Activated naive CD8-positive, alpha-beta T cell treated with anti-CD3 and anti-CD28 coated beads, Interleukin-2, amount 10 ng/mL, durations not matched to agents 7 days and 5 days (primary cell): ENCODE measurements at regions of chr9 and their contacts with region 1.

Region 1: GRCh38 chr9:137114610-137115391 is at the start of gene DPP7:
- DNase-seq: peak; percentile 91
- ATAC-seq: peak; percentile 89
- H3K4me3 Mint-ChIP-seq: peak within 1 kb of the TSS; percentile 74
- H3K27ac Mint-ChIP-seq: peak within 1 kb of the TSS; percentile 52
- H3K4me1 Mint-ChIP-seq: peaks cover 3% of the 10 kb centered on the region
- H3K27me3 Mint-ChIP-seq: no peaks in the 10 kb centered on the region
- total RNA-seq, gene DPP7: 314 to 322 TPM

Region 2: GRCh38 chr9:137086531-137087408 is 28.0 kb before region 1 on chr9 and contains the start of gene MAN1B1:
- POLR2A ChIA-PET with region 1: interaction called, 12 read pairs
- DNase-seq: peak; percentile 99
- ATAC-seq: peak; percentile 89
- H3K4me3 Mint-ChIP-seq: peak within 1 kb of the TSS; percentile 92
- H3K27ac Mint-ChIP-seq: peak within 1 kb of the TSS; percentile 93
- H3K4me1 Mint-ChIP-seq: peaks cover 23% of the 10 kb centered on the region
- H3K27me3 Mint-ChIP-seq: no peaks in the 10 kb centered on the region
- total RNA-seq, gene MAN1B1: 63.2 to 63.9 TPM

Region 3: DNA sequence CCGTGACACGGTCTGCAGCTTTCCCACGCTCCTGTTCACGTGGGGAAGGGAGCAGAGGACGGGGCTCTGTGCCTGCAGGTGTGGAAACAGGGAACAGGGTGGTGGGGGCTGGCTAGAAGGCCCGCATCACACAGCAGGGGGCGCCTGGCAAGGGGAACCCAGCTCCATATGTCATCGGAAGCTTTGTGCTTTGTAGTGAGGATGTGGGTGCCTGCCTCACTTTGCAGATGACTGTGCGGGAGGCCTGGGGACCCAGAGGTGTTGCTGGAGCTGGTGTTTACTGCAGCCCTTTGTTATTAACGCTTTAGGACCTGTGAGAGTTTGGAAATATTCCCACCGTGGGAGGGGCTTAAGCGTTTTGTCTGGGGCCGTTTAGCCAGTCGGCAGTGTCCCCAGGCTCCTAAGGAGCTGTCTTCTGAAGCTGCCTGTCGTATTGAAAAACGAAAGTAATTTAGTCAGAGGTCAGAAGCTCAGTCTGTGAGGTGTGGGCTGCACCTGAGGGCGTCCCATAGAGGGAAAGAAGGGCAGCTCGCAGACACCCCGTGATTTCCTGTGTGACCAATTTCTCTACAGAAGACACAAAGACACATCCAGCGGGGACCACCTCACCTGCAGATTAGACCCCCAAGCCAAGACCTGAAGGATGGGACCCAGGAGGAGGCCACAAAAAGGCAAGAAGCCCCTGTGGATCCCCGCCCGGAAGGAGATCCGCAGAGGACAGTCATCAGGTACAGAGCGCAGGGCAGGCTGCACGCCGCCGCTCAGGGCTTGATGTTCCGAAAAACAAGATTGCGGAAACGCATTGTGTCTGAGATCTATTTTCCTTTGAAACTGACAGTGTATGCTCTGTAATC is 18.9 kb before region 1 on chr9:
- POLR2A ChIA-PET with region 1: interaction called, 28 read pairs
- DNase-seq: peak; percentile 87
- ATAC-seq: peak; percentile 99
- H3K4me3 Mint-ChIP-seq: peak overlapping the region; percentile 85
- H3K27ac Mint-ChIP-seq: peak overlapping the region; percentile 96
- H3K4me1 Mint-ChIP-seq: peaks cover 16% of the 10 kb centered on the region
- H3K27me3 Mint-ChIP-seq: no peaks in the 10 kb centered on the region

Region 4: GRCh38 chr9:137168905-137169856 is 54.4 kb after region 1 on chr9:
- POLR2A ChIA-PET with region 1: no interaction called
- DNase-seq: peak; percentile 54
- ATAC-seq: peak; percentile 18
- H3K4me3 Mint-ChIP-seq: peak overlapping the region; percentile 43
- H3K27ac Mint-ChIP-seq: no peak overlapping the region
- H3K4me1 Mint-ChIP-seq: peaks cover 3% of the 10 kb centered on the region
- H3K27me3 Mint-ChIP-seq: peaks cover 29% of the 10 kb centered on the region